ENCODE measurements at regions of chrX and their contacts with region 1.

Region 1: GRCh38 chrX:22748093-22748999 is 251.4 kb upstream of the DDX53 start:
- DNase-seq: peak in 13 of 14 experiments; percentile 0 to 51 (median 13)
- ATAC-seq: no peak
- H3K4me3 ChIP-seq: no peak overlapping the region
- H3K4me3 Mint-ChIP-seq: no peak overlapping the region
- H3K27ac ChIP-seq: no peak overlapping the region
- H3K27ac Mint-ChIP-seq: no peak overlapping the region
- H3K4me1 ChIP-seq: no peaks in the 10 kb centered on the region
- H3K4me1 Mint-ChIP-seq: no peaks in the 10 kb centered on the region
- H3K27me3 ChIP-seq: no peaks in the 10 kb centered on the region
- H3K27me3 Mint-ChIP-seq: no peaks in the 10 kb centered on the region
- CTCF ChIP-seq: peak; percentile 60

Region 2: DNA sequence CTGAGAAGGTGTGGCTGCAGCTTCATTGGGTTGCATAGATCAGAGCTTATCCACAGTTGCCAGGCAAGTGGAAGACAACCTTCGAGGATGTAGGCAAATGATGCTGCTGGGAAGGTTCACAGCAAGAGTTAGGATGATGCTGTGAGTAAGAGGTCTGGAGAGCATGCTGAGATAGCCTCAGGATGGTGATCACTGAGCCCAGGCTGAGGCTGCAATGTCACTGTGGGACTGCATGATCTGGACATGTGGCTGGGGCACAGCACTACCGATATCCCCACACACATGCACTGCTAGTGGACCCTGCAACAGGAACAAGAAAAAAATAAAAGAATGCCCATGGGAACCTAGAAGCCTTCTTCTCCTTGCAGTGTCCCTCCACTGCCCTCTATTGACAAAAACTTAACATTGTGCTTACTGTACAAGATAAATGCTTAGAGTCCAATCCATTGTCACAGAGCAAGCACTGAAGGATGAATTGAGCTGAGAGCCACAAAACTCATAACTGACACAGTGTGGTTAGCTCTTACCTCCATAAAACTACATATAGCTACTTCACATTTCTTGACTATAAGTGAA is 1268.6 kb before region 1 on chrX:
- CTCF ChIA-PET with region 1: no interaction called
- POLR2A ChIA-PET with region 1: no interaction called
- intact Hi-C with region 1: loop called in 1 of 2 experiments (anchors 10 kb)
- DNase-seq: peak in 5 of 14 experiments; percentile 0 to 61 (median 51)
- ATAC-seq: peak; percentile 59
- H3K4me3 ChIP-seq: no peak overlapping the region
- H3K4me3 Mint-ChIP-seq: no peak overlapping the region
- H3K27ac ChIP-seq: no peak overlapping the region
- H3K27ac Mint-ChIP-seq: no peak overlapping the region
- H3K4me1 ChIP-seq: peaks cover 3% of the 10 kb centered on the region
- H3K4me1 Mint-ChIP-seq: peaks cover 7% of the 10 kb centered on the region
- H3K27me3 ChIP-seq: no peaks in the 10 kb centered on the region
- H3K27me3 Mint-ChIP-seq: no peaks in the 10 kb centered on the region
- CTCF ChIP-seq: peak; percentile 57

Region 3: GRCh38 chrX:22135994-22136684 is 612.2 kb before region 1 on chrX:
- CTCF ChIA-PET with region 1: interaction called, 3 read pairs
- POLR2A ChIA-PET with region 1: no interaction called
- intact Hi-C with region 1: loop called (anchors 5 kb)
- DNase-seq: peak in 6 of 14 experiments; percentile 1 to 58 (median 38)
- ATAC-seq: peak; percentile 44
- H3K4me3 ChIP-seq: no peak overlapping the region
- H3K4me3 Mint-ChIP-seq: peak overlapping the region; percentile 71
- H3K27ac ChIP-seq: no peak overlapping the region
- H3K27ac Mint-ChIP-seq: no peak overlapping the region
- H3K4me1 ChIP-seq: peaks cover 3% of the 10 kb centered on the region
- H3K4me1 Mint-ChIP-seq: peaks cover 10% of the 10 kb centered on the region
- H3K27me3 ChIP-seq: no peaks in the 10 kb centered on the region
- H3K27me3 Mint-ChIP-seq: no peaks in the 10 kb centered on the region
- CTCF ChIP-seq: peak; percentile 62

Region 4: DNA sequence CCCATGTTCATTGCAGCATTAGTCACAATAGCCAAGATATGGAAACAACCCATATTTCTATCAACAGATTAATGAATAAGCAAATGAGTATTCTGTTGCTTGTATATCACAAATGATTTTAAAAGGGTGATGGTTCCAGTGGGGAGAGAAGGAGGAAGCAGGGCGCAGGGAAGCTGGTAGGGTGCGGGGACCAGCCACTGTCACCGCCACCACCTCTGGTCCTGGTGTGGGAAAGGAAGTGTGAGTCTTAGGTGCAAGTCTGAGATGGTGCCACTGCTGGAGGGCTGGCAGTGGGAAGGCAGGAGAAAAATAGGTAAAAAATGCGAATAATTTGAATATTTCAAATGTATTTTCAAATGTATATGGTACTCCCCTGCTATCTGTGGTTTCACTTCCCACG is 35.4 kb before region 1 on chrX:
- CTCF ChIA-PET with region 1: no interaction called
- POLR2A ChIA-PET with region 1: no interaction called
- intact Hi-C with region 1: no loop called
- DNase-seq: no peak
- ATAC-seq: no peak
- H3K4me3 ChIP-seq: no peak overlapping the region
- H3K4me3 Mint-ChIP-seq: no peak overlapping the region
- H3K27ac ChIP-seq: no peak overlapping the region
- H3K27ac Mint-ChIP-seq: no peak overlapping the region
- H3K4me1 ChIP-seq: no peaks in the 10 kb centered on the region
- H3K4me1 Mint-ChIP-seq: no peaks in the 10 kb centered on the region
- H3K27me3 ChIP-seq: no peaks in the 10 kb centered on the region
- H3K27me3 Mint-ChIP-seq: no peaks in the 10 kb centered on the region
- CTCF ChIP-seq: no peak